ENCODE measurements at regions of chr3 and their contacts with region 1.

Region 1: DNA sequence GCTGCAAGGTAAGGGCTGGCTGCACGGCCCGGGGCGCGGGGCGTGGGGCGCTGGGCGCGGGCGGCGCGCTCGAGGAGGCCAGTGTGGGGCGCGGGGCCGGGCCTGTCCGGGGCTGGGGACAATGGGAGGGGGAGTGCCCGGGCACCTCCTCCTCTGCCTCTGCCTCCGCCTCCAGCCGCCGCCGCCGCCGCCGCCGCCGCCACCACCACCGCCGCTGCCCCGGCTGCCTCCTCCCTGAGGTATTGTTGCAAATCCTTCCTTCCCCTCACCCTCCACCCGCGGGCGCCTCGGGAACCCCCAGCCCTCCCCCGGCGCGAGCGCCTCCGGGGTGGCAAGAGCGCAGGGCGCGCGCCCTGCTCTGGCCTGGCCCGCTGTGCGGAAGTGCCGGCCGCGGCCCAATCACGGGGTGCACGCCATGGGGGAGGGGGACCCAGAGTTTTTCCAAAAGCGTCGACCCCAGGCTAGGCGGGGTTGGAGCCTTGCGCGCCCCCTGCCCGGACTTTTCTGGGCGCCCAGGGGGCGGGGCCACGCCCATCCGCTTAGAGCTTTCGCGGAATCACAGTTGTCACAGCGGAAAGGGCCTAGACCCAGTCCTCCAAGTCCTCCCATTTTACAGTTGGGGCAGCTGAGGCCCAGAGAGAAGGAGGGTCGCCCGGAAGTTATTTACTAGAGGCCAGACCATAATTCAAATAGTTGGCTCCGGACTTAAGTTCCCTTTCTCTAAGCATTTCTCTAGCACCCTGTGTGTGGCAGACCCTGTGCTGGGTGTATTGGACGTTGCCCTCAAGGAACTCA is at the start of gene LPP:
- DNase-seq: peak; percentile 88
- ATAC-seq: peak; percentile 90
- total RNA-seq, gene LPP: 92.9 TPM

Region 2: GRCh38 chr3:187739561-187740332 is 414.5 kb before region 1 on chr3:
- intact Hi-C with region 1: loop called (anchors 5 kb)
- DNase-seq: peak; percentile 88
- ATAC-seq: peak; percentile 18

Region 3: GRCh38 chr3:188052169-188053030 is 101.8 kb before region 1 on chr3:
- intact Hi-C with region 1: loop called (anchors 10 kb)
- DNase-seq: peak; percentile 90
- ATAC-seq: peak; percentile 95

Region 4: DNA sequence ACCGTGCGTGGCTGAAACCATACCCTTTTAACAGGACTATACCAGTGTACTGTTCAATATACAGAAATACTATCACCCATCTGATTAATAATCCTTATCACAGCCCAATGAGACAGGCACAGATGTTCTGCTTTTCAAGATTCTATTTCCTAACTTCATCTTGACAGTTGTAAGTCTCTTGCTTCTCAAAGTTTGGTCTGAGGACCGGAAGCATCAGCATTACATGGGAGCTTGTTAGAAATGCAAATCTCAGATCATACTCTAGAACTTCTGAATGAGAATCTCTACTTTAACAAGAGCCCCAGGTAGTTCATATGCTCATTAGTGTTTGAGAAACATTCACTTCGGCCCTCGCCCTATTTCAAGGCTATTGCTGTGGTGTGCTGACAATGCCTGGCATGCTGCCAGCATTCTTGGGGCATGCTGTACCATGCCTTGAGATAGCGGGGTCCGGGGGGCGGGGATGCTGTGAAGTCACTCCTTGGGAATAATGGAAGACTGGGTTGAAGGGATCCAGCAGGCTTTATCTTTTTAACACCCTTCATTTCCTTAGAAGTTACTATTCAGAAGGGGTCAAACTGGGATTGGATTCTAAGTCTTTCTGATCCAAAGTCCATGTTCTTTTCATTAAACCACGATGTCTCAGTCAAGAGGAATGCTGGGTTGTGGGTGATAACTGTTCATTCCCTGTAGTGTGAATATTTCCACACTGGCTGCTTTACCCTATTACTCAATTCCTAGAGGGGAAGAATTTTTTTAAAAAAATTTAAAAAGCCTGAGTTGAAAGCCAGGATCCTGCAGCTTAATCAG is 194.4 kb after region 1 on chr3:
- intact Hi-C with region 1: loop called (anchors 10 kb)
- DNase-seq: peak; percentile 89
- ATAC-seq: peak; percentile 75

Region 5: DNA sequence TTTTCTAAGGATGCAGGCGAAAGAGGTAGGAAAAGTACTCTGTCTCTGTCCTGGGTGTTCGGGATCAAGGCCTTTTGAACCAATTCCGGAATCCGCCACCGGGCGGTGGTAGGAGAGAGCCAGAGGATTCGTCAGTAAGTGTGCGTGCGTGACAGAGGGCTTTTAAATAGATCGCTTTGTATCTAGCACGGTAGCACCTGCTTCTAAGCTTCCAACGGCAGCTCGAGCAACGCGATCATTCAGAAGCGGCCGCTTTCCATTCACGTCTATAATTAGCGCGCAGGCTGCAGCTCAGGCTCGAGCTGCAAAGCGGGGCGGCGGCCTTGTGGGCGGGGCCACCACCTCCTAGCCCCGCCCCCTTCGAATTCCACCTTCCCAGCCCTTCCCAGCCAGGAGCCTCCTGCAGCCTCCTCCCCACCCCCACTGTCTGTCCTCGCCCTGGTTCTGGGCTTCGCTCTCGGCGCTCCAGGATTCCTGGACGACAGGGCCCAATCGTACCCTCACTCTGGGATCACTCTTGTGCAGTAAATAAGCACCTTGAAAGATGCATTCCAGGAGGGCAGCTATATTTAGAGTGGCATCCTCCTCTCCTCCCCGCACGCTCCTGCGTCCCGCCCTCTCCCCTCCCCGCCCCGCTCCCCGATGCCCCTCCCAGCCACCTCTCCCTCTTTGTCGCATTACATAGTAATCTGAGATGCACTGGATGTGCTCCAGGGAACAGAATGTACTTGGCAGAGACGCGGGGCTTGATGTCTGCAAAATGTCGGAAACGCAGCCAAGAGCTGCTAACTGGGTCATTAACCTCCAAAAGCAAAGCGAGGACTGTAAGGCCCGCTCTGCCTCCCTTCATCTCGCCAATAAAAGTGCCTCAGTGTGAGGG is 793.4 kb after region 1 on chr3:
- intact Hi-C with region 1: loop called (anchors 10 kb)
- DNase-seq: peak; percentile 94
- ATAC-seq: peak; percentile 92